SK-N-SH (cell line): ENCODE measurements at regions of chr9 and their contacts with region 1.

Region 1: DNA sequence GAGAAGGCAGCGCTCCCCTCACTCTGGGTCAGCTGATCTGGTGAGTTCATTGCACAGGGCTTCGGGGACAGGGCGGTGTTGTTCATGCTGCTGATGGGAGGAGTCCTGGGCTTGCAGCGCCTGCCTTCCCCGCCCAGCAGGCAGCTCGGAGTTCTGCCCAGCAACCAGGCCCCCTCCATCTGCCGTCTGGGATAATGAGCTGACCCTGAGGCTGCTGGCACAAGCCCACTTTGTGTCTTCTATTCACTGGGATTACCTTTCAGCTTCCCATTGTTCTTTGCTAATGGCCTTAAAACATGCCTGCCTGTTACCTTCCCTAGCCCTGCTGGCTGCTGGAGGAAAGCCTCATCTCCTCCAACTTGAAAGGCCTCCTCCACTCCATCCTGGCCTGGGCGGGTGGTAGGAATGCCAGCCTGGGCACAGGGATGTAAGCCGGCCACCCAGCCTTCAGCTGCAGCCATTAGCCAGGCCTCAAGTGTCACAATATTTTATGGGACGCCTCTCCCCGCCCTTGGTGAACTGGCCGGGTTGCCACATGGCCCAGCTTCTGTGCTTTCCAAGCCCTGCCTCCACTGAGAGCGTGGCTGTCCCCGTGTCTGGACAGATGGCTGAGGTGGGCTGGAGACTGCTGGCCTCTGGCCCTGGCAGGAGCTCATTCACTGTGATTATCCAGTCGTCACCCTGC is 70.4 kb downstream of the GADD45G start:
- DNase-seq: peak; percentile 89
- H3K4me3 ChIP-seq: no peak overlapping the region; a peak in 1 of 4 replicates
- H3K27ac ChIP-seq: peak overlapping the region in 1 of 2 experiments; percentile 100; a peak in 2 of 4 replicates
- H3K4me1 ChIP-seq: peaks cover 0 to 68% of the 10 kb centered on the region in 2 experiments; a peak in 3 of 4 replicates
- H3K27me3 ChIP-seq: no peaks in the 10 kb centered on the region
- CTCF ChIP-seq: no peak
- EP300 ChIP-seq: peak in 1 of 2 experiments; percentile 91; a peak in 2 of 4 replicates
- RAD21 ChIP-seq: peak; percentile 47

Region 2: GRCh38 chr9:89661956-89662717 is 13.1 kb before region 1 on chr9:
- CTCF ChIA-PET with region 1: interaction called, 7 read pairs
- POLR2A ChIA-PET with region 1: interaction called, 13 read pairs
- DNase-seq: peak; percentile 96
- H3K4me3 ChIP-seq: peak overlapping the region; percentile 3 to 12; a peak in 3 of 4 replicates
- H3K27ac ChIP-seq: peak overlapping the region in 1 of 2 experiments; percentile 90; a peak in 2 of 4 replicates
- H3K4me1 ChIP-seq: peaks cover 0 to 50% of the 10 kb centered on the region in 2 experiments; a peak in 2 of 4 replicates
- H3K27me3 ChIP-seq: no peaks in the 10 kb centered on the region
- CTCF ChIP-seq: no peak
- EP300 ChIP-seq: peak in 1 of 2 experiments; percentile 9; a peak in 1 of 4 replicates
- RAD21 ChIP-seq: no peak

Region 3: DNA sequence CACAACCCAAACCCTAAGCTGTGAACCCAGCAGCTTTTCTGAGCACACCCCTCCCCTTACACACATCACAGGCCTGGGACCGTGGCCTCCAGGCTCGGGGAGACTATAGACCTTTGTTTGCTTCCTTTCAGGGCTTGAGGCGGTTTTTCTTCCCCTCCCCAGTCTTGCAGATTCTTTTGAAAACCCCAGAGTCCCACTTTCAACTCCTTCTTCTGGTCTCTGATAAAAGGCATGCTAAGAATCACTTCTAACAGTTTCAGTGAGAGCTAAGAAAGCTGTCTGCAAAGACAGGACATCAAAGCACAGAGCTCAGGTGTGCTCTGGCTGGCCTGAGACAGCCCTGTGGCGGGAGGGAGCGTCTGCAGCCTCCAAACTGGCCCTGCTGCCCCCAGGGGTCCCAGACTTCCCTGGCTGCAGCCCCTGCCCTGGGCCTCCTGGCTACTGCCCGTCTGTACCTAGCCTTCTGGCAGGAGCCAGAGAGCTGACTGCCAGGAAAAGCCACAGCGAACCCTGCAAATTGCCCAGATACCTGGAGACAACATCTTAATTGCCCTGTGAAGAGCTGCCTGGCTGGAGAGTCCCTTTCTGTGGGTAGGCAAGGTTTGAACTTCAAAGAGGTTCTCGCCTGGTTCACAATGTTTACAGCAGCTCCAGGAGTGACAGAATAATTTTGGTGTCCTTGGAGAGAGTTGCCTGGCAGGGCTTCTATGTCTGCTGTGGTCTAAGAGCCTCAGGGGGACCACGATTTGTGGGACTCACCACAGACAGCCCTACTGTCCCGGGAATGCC is 68.6 kb after region 1 on chr9:
- CTCF ChIA-PET with region 1: interaction called, 8 read pairs
- POLR2A ChIA-PET with region 1: interaction called, 19 read pairs
- DNase-seq: peak; percentile 55
- H3K4me3 ChIP-seq: no peak overlapping the region
- H3K27ac ChIP-seq: peak overlapping the region in 1 of 2 experiments; percentile 69; a peak in 2 of 4 replicates
- H3K4me1 ChIP-seq: peaks cover 0 to 64% of the 10 kb centered on the region in 2 experiments; a peak in 1 of 4 replicates
- H3K27me3 ChIP-seq: no peaks in the 10 kb centered on the region
- CTCF ChIP-seq: no peak
- EP300 ChIP-seq: peak in 1 of 2 experiments; percentile 42; a peak in 1 of 4 replicates
- RAD21 ChIP-seq: peak; percentile 25; the same call in 1 of the 2 replicates

Region 4: GRCh38 chr9:89750147-89750861 is 75.1 kb after region 1 on chr9:
- CTCF ChIA-PET with region 1: interaction called, 8 read pairs
- POLR2A ChIA-PET with region 1: interaction called, 20 read pairs
- DNase-seq: peak; percentile 71
- H3K4me3 ChIP-seq: no peak overlapping the region
- H3K27ac ChIP-seq: peak overlapping the region in 1 of 2 experiments; percentile 74; a peak in 2 of 4 replicates
- H3K4me1 ChIP-seq: peaks cover 0 to 62% of the 10 kb centered on the region in 2 experiments; a peak in 2 of 4 replicates
- H3K27me3 ChIP-seq: no peaks in the 10 kb centered on the region
- CTCF ChIP-seq: no peak
- EP300 ChIP-seq: peak in 1 of 2 experiments; percentile 40; a peak in 1 of 4 replicates
- RAD21 ChIP-seq: peak; percentile 35

Region 5: GRCh38 chr9:89778100-89779090 is 103.2 kb after region 1 on chr9:
- CTCF ChIA-PET with region 1: no interaction called
- POLR2A ChIA-PET with region 1: interaction called, 13 read pairs
- DNase-seq: peak; percentile 82
- H3K4me3 ChIP-seq: no peak overlapping the region; a peak in 1 of 4 replicates
- H3K27ac ChIP-seq: peak overlapping the region in 1 of 2 experiments; percentile 71; a peak in 2 of 4 replicates
- H3K4me1 ChIP-seq: peaks cover 0 to 20% of the 10 kb centered on the region in 2 experiments; a peak in 1 of 4 replicates
- H3K27me3 ChIP-seq: no peaks in the 10 kb centered on the region
- CTCF ChIP-seq: no peak
- EP300 ChIP-seq: peak in 1 of 2 experiments; percentile 87; a peak in 2 of 4 replicates
- RAD21 ChIP-seq: peak; percentile 22; the same call in 1 of the 2 replicates